Dorsolateral prefrontal cortex (tissue), 120 donors: ENCODE measurements at regions of chr5 and their contacts with region 1.

Region 1: DNA sequence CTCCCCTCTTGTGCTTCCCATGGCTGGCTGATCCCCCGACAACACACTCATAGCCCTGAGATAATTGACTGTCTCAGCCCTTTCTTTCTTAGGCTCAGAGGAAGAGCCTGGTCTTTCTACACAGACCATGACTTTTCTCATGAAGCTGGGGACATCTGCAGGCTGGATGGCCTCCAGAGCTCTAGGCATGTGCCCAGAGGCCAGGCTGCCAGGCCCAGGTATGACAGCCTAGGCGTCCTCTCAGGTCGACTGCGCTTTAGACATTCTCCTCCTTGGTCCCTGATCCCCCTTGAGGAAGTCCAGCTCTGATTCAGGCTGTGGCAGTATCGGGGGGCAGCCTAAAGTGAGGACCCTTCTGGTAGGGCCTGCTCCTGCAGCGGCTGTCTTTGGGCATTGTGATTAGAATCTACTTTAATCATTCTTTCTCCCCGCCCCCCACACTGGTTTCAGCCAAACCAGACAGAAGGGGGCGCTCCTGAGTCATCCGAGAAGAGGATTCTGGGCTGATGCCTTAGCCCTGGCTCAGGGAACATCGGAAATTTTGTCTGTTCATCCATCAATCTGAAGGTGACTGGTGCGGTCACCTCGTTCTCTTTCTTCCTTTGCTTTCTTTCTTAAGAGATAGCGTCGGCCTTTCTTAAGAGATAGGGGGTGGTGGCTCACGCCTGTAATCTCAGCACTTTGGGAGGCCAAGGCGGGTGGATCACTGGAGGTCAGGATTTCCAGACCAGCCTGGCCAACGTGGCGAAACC is 66.5 kb upstream of the HSPA9 start:
- DNase-seq: peak in 9 of 10 donors; percentile 22 to 86 (median 77)
- H3K4me3 ChIP-seq: no peak overlapping the region
- H3K27ac ChIP-seq: peak overlapping the region in 40 of 59 donors; percentile 2 to 81 (median 58)
- H3K27me3 ChIP-seq: no peaks in the 10 kb centered on the region
- CTCF ChIP-seq: peak; percentile 60 to 91 (median 82)

Region 2: GRCh38 chr5:138869763-138870500 is 228.2 kb after region 1 on chr5:
- intact Hi-C with region 1: loop called in 1 of 2 experiments (anchors 5 kb)
- DNase-seq: peak in 2 of 10 donors; percentile 33 to 56
- H3K4me3 ChIP-seq: peak overlapping the region; percentile 18 to 88 (median 66)
- H3K27ac ChIP-seq: peak overlapping the region in 58 of 59 donors; percentile 15 to 95 (median 87)
- H3K27me3 ChIP-seq: no peaks in the 10 kb centered on the region
- CTCF ChIP-seq: peak in 3 of 56 donors; percentile 6 to 16 (median 8)